B cell (primary cell): ENCODE measurements at regions of chr7 and their contacts with region 1.

Region 1: GRCh38 chr7:14104861-14105260 is 115.4 kb upstream of the ETV1 start:
- DNase-seq: no peak
- ATAC-seq: no peak
- H3K4me3 ChIP-seq: no peak overlapping the region
- H3K4me3 Mint-ChIP-seq: no peak overlapping the region
- H3K27ac ChIP-seq: no peak overlapping the region
- H3K27ac Mint-ChIP-seq: no peak overlapping the region
- H3K4me1 ChIP-seq: no peaks in the 10 kb centered on the region
- H3K4me1 Mint-ChIP-seq: no peaks in the 10 kb centered on the region
- H3K27me3 ChIP-seq: no peaks in the 10 kb centered on the region
- H3K27me3 Mint-ChIP-seq: no peaks in the 10 kb centered on the region
- CTCF ChIP-seq: no peak

Region 2: DNA sequence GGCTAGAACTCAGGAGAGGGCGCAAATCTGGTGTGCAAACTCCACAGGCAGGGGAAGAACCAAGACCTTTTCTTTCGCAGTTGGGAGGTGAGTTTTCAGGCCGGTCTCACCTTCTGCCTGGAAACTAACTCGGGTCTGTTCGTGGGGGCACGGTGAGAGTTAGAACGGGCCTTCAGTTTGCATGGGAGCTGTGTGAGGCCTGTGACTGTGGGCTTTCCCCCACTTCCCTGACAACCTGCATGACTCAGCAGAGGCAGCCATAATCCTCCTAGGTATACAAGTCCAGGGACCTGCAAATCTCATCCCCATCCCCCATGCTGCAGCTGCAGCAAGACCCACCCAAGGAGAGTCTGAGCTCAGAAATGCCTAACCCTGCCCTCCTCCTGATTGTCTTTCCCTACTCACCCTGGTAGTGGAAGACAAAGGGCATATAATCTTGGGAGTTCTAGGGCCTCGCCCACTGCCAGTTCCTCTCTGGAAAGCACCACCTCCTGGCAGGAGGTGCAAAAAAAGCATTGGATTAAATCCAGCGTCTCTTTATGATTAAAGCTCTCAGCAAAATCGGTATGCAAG is 79.5 kb after region 1 on chr7:
- CTCF ChIA-PET with region 1: no interaction called
- POLR2A ChIA-PET with region 1: no interaction called
- intact Hi-C with region 1: no loop called
- DNase-seq: no peak
- ATAC-seq: no peak
- H3K4me3 ChIP-seq: no peak overlapping the region
- H3K4me3 Mint-ChIP-seq: no peak overlapping the region
- H3K27ac ChIP-seq: no peak overlapping the region
- H3K27ac Mint-ChIP-seq: no peak overlapping the region
- H3K4me1 ChIP-seq: no peaks in the 10 kb centered on the region
- H3K4me1 Mint-ChIP-seq: no peaks in the 10 kb centered on the region
- H3K27me3 ChIP-seq: no peaks in the 10 kb centered on the region
- H3K27me3 Mint-ChIP-seq: no peaks in the 10 kb centered on the region
- CTCF ChIP-seq: no peak

Region 3: DNA sequence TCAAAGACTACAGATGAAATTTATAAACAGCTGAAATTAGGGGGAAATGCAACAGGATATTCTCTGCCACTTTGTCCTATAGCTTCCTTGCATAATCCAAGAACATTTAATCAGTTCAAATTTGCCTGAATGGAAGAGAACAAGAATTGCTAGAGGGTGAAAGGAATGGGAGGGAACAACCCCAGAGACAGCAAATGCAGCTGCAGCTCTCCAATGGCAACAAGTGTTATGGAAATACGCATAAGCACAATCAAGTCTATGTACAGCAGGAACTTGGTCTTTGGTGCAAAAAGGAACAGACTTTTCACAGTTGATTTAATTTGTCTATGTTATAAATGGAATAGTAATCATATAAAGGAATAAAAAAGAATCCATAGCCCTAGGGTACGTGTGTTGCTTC is 153.6 kb after region 1 on chr7:
- CTCF ChIA-PET with region 1: no interaction called
- POLR2A ChIA-PET with region 1: no interaction called
- intact Hi-C with region 1: no loop called
- DNase-seq: no peak
- ATAC-seq: no peak
- H3K4me3 ChIP-seq: no peak overlapping the region
- H3K4me3 Mint-ChIP-seq: no peak overlapping the region
- H3K27ac ChIP-seq: no peak overlapping the region
- H3K27ac Mint-ChIP-seq: no peak overlapping the region
- H3K4me1 ChIP-seq: no peaks in the 10 kb centered on the region
- H3K4me1 Mint-ChIP-seq: no peaks in the 10 kb centered on the region
- H3K27me3 ChIP-seq: no peaks in the 10 kb centered on the region
- H3K27me3 Mint-ChIP-seq: no peaks in the 10 kb centered on the region
- CTCF ChIP-seq: no peak

Region 4: GRCh38 chr7:15977663-15978062 is 1872.8 kb after region 1 on chr7:
- CTCF ChIA-PET with region 1: no interaction called
- POLR2A ChIA-PET with region 1: no interaction called
- intact Hi-C with region 1: loop called (anchors 5 kb)
- DNase-seq: no peak
- ATAC-seq: no peak
- H3K4me3 ChIP-seq: no peak overlapping the region
- H3K4me3 Mint-ChIP-seq: no peak overlapping the region
- H3K27ac ChIP-seq: no peak overlapping the region
- H3K27ac Mint-ChIP-seq: no peak overlapping the region
- H3K4me1 ChIP-seq: no peaks in the 10 kb centered on the region
- H3K4me1 Mint-ChIP-seq: no peaks in the 10 kb centered on the region
- H3K27me3 ChIP-seq: no peaks in the 10 kb centered on the region
- H3K27me3 Mint-ChIP-seq: no peaks in the 10 kb centered on the region
- CTCF ChIP-seq: no peak